Right ventricle myocardium inferior (tissue), 1 donor: ENCODE measurements at regions of chr19 and their contacts with region 1.

Region 1: GRCh38 chr19:18589380-18590272 is 1.0 kb downstream of the REX1BD start:
- DNase-seq: peak; percentile 87
- ATAC-seq: peak; percentile 59

Region 2: GRCh38 chr19:18281082-18282020 is 308.3 kb before region 1 on chr19 and contains the start of gene JUND:
- intact Hi-C with region 1: no loop called
- DNase-seq: peak; percentile 100
- ATAC-seq: peak; percentile 83
- total RNA-seq, gene JUND: 113 TPM

Region 3: GRCh38 chr19:18629166-18630088 is 39.8 kb after region 1 on chr19:
- intact Hi-C with region 1: no loop called
- DNase-seq: peak; percentile 78
- ATAC-seq: peak; percentile 96

Region 4: GRCh38 chr19:18675779-18676178 is 86.2 kb after region 1 on chr19:
- intact Hi-C with region 1: loop called (anchors 5 kb)
- DNase-seq: no peak
- ATAC-seq: no peak

Region 5: DNA sequence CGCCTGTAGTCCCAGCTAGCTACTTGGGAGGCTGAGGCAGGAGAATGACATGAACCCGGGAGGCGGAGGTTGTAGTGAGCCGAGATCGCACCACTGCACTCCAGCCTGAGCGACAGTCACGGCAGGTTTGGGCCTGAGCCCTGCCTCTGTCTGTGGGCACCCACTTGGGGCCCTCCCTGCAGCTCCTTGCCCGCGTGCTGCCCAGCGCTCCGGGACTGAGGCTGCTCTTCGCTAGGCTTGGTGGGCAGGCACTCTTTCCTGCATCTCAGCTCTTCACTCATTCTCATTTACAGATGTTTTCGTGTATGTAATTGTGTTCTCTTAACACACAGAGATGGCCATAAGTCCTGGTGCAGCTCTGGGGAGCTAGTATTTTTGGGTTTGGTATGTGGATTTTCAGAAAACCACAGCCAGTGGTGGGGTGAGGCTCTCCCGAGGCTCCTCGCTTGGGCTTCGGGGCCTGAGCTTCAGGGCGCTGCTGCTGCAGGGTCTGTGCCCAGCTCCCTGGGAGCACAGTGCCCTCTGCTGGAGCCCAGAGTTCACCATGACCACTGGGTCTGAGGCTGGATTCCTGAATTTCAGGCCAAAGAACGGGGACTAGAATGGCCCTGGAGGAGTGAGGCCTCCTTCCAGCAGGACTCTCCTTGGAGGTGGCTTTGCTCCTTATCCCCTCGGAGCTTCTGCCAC is 257.4 kb after region 1 on chr19:
- intact Hi-C with region 1: loop called (anchors 2 kb)
- DNase-seq: peak; percentile 90
- ATAC-seq: peak; percentile 77